CD4-positive, alpha-beta T cell (primary cell): ENCODE measurements at regions of chr6 and their contacts with region 1.

Region 1: GRCh38 chr6:135535989-135536414 is 38.5 kb upstream of the AHI1 start:
- DNase-seq: peak in 3 of 14 experiments; percentile 46 to 60 (median 56)
- ATAC-seq: peak; percentile 68
- H3K4me3 ChIP-seq: no peak overlapping the region
- H3K4me3 Mint-ChIP-seq: peak overlapping the region; percentile 43
- H3K27ac ChIP-seq: no peak overlapping the region
- H3K27ac Mint-ChIP-seq: no peak overlapping the region
- H3K4me1 ChIP-seq: peaks cover 5% of the 10 kb centered on the region
- H3K4me1 Mint-ChIP-seq: peaks cover 6% of the 10 kb centered on the region
- H3K27me3 ChIP-seq: no peaks in the 10 kb centered on the region
- H3K27me3 Mint-ChIP-seq: no peaks in the 10 kb centered on the region
- CTCF ChIP-seq: peak; percentile 59

Region 2: GRCh38 chr6:135117413-135117968 is 418.5 kb before region 1 on chr6:
- CTCF ChIA-PET with region 1: no interaction called
- POLR2A ChIA-PET with region 1: no interaction called
- intact Hi-C with region 1: no loop called
- DNase-seq: peak in 2 of 14 experiments; percentile 14 to 20
- ATAC-seq: no peak
- H3K4me3 ChIP-seq: no peak overlapping the region
- H3K4me3 Mint-ChIP-seq: peak overlapping the region; percentile 78
- H3K27ac ChIP-seq: peak overlapping the region; percentile 26 to 50
- H3K27ac Mint-ChIP-seq: peak overlapping the region; percentile 78
- H3K4me1 ChIP-seq: peaks cover 16% of the 10 kb centered on the region
- H3K4me1 Mint-ChIP-seq: peaks cover 64% of the 10 kb centered on the region
- H3K27me3 ChIP-seq: no peaks in the 10 kb centered on the region
- H3K27me3 Mint-ChIP-seq: no peaks in the 10 kb centered on the region
- CTCF ChIP-seq: no peak

Region 3: GRCh38 chr6:135451693-135452092 is 84.3 kb before region 1 on chr6:
- CTCF ChIA-PET with region 1: interaction called, 4 read pairs
- POLR2A ChIA-PET with region 1: no interaction called
- intact Hi-C with region 1: loop called in 1 of 2 experiments (anchors 5 kb)
- DNase-seq: peak in 3 of 14 experiments; percentile 42 to 66 (median 64)
- ATAC-seq: peak; percentile 54
- H3K4me3 ChIP-seq: no peak overlapping the region
- H3K4me3 Mint-ChIP-seq: no peak overlapping the region
- H3K27ac ChIP-seq: no peak overlapping the region
- H3K27ac Mint-ChIP-seq: no peak overlapping the region
- H3K4me1 ChIP-seq: no peaks in the 10 kb centered on the region
- H3K4me1 Mint-ChIP-seq: no peaks in the 10 kb centered on the region
- H3K27me3 ChIP-seq: no peaks in the 10 kb centered on the region
- H3K27me3 Mint-ChIP-seq: no peaks in the 10 kb centered on the region
- CTCF ChIP-seq: peak; percentile 86

Region 4: GRCh38 chr6:135520781-135521180 is 15.2 kb before region 1 on chr6:
- CTCF ChIA-PET with region 1: no interaction called
- POLR2A ChIA-PET with region 1: no interaction called
- intact Hi-C with region 1: no loop called
- DNase-seq: no peak
- ATAC-seq: no peak
- H3K4me3 ChIP-seq: no peak overlapping the region
- H3K4me3 Mint-ChIP-seq: no peak overlapping the region
- H3K27ac ChIP-seq: no peak overlapping the region
- H3K27ac Mint-ChIP-seq: no peak overlapping the region
- H3K4me1 ChIP-seq: no peaks in the 10 kb centered on the region
- H3K4me1 Mint-ChIP-seq: no peaks in the 10 kb centered on the region
- H3K27me3 ChIP-seq: no peaks in the 10 kb centered on the region
- H3K27me3 Mint-ChIP-seq: no peaks in the 10 kb centered on the region
- CTCF ChIP-seq: no peak

Region 5: DNA sequence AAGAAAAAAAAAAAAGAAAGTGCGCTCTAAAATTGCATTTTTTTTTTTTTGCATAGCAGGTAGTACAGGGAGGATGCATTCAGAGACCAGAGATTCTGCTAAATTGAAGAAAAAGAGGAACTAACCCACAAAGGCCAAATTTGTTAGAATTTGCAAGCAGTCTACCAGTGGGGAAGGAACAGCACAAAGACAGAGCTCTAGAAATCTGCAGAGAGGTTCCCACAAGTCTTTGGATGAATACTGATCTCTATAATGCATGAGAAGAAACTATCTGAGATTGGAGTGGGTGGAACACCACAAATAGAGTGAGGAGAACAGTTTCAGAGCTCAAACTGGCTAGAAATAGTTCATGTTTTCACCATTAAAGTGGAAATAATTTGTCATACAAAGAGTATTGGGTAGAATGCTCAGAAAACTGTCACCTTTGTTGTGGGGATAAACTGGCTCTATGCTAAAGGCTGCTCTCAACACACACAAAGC is 41.1 kb after region 1 on chr6:
- CTCF ChIA-PET with region 1: no interaction called
- POLR2A ChIA-PET with region 1: no interaction called
- intact Hi-C with region 1: no loop called
- DNase-seq: no peak
- ATAC-seq: no peak
- H3K4me3 ChIP-seq: no peak overlapping the region
- H3K4me3 Mint-ChIP-seq: no peak overlapping the region
- H3K27ac ChIP-seq: no peak overlapping the region
- H3K27ac Mint-ChIP-seq: no peak overlapping the region
- H3K4me1 ChIP-seq: no peaks in the 10 kb centered on the region
- H3K4me1 Mint-ChIP-seq: peaks cover 19% of the 10 kb centered on the region
- H3K27me3 ChIP-seq: no peaks in the 10 kb centered on the region
- H3K27me3 Mint-ChIP-seq: no peaks in the 10 kb centered on the region
- CTCF ChIP-seq: no peak

Region 6: GRCh38 chr6:135604035-135604860 is 68.2 kb after region 1 on chr6:
- CTCF ChIA-PET with region 1: no interaction called
- POLR2A ChIA-PET with region 1: no interaction called
- intact Hi-C with region 1: no loop called
- DNase-seq: no peak
- ATAC-seq: no peak
- H3K4me3 ChIP-seq: no peak overlapping the region
- H3K4me3 Mint-ChIP-seq: no peak overlapping the region
- H3K27ac ChIP-seq: no peak overlapping the region
- H3K27ac Mint-ChIP-seq: no peak overlapping the region
- H3K4me1 ChIP-seq: no peaks in the 10 kb centered on the region
- H3K4me1 Mint-ChIP-seq: no peaks in the 10 kb centered on the region
- H3K27me3 ChIP-seq: no peaks in the 10 kb centered on the region
- H3K27me3 Mint-ChIP-seq: no peaks in the 10 kb centered on the region
- CTCF ChIP-seq: no peak